HEK293T (cell line): ENCODE measurements at regions of chr4 and their contacts with region 1.

Region 1: DNA sequence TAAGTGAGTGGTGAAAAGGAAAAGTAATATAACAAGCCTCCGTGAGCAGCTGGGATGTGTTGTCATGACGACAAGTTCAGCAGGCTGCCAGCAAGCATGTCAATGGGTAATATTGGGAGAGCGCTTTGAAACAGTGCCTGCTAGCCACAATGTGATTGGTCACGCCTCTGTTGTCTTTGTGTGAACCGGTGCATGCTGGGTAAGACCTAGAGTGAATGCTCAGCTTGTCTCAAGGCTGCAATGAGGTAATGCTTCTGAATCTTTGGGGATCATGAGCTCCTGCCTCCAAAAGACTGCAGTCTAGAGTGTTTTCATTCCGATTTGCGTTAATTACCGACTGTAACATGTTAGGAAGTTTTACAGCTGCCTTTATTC is 54.9 kb downstream of the STOX2 start:
- DNase-seq: peak; percentile 72

Region 2: DNA sequence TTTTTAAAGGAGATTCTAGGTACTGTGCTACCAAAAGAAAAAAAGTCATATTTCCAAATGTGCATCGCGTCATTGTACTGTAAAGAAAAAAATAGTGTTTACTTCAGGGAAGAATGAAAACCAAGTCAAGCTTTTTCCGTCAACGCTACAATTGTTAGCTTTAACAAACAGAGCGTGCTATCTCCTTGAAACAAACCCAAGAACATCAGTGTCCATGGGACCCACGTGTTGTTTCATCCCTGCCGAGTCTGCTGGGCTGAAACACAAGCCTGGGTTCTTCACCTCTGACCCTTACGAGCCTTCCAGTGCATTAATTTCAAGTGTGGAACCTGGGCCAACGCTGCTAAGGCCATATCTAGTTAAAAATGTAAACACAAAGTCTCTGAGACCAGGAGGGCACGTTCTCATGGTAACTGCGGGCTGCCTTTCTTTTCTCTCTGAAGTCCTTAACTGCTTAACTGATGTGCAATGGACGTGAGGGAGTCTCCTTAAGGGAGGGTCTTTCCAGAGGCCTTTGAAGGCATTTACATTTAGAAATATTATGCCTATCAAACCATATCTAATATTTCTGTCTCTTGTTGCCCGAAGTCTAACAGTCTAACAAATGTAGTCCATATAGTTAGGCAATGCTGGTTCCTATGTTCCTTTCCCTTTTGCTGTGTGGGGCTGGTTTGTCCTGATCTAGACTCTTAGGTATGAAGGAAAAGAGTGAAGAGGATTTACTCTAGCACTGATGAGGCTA is 418.9 kb before region 1 on chr4:
- CTCF ChIA-PET with region 1: no interaction called
- POLR2A ChIA-PET with region 1: no interaction called
- DNase-seq: no peak

Region 3: GRCh38 chr4:183905081-183905592 is 54.9 kb before region 1 on chr4 and contains the start of gene STOX2:
- CTCF ChIA-PET with region 1: no interaction called
- POLR2A ChIA-PET with region 1: interaction called, 37 read pairs
- DNase-seq: peak; percentile 62

Region 4: DNA sequence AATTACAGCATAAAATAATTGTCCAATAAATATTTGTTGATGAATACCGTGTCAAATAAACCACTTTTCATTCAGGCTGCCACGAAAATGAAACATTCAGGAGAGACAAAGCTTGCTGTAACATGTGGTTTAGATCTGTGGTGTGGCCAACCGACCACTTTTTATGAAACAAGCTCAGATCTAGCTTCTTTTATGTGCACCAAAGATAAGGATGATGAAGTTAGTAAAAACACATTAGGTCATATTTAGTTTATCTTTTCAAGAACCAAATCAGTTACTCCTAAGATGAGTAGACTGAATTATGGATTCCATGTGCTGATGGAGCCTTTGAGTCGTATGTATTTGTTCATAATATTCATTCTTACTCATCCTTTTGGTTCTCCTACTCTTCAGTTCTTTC is 19.2 kb before region 1 on chr4:
- CTCF ChIA-PET with region 1: interaction called, 4 read pairs
- POLR2A ChIA-PET with region 1: interaction called, 15 read pairs
- DNase-seq: no peak

Region 5: DNA sequence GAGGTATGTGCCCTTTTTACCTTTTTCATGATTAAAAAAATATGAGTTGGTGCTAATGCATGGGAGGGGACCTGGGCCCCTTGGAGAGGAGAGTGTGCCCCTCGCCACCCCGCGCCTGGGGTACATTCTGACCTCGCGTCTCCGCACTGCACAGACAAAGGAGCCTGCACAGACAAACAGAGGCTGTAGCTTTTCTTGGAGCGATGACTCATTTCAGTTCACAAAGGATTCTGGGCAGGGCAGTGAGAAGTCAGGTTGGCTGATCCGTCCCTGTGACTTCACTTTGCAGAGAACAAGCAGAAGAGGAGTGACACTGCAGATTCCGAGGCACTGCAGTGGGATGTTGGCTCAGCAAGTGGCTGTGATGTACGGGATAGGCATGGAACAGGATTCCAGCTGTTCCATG is 28.0 kb after region 1 on chr4:
- CTCF ChIA-PET with region 1: interaction called, 3 read pairs
- POLR2A ChIA-PET with region 1: interaction called, 43 read pairs
- DNase-seq: peak; percentile 28

Region 6: GRCh38 chr4:184046148-184046547 is 86.1 kb after region 1 on chr4:
- CTCF ChIA-PET with region 1: no interaction called
- POLR2A ChIA-PET with region 1: no interaction called
- DNase-seq: no peak

Region 7: DNA sequence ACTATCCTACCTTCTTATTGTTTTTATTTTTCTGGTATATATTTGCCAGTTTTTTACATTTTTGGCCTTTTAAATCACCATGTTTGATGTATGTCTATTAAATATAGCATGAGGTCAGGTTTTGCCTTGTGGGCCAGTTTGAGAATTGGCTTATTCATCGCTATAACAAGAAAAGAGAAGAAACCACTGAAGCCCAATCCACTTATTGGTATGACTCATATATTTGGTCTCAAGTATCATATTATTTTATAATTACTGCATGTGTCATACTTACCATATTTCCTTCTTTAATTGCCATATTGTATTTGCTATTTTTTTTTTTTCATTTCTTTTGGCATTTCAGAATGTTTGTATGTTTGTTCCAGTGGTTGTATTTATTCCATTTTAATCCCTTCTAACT is 415.0 kb after region 1 on chr4:
- CTCF ChIA-PET with region 1: no interaction called
- POLR2A ChIA-PET with region 1: no interaction called
- DNase-seq: no peak